Esophagus muscularis mucosa (tissue), 4 donors: ENCODE measurements at regions of chr5 and their contacts with region 1.

Region 1: DNA sequence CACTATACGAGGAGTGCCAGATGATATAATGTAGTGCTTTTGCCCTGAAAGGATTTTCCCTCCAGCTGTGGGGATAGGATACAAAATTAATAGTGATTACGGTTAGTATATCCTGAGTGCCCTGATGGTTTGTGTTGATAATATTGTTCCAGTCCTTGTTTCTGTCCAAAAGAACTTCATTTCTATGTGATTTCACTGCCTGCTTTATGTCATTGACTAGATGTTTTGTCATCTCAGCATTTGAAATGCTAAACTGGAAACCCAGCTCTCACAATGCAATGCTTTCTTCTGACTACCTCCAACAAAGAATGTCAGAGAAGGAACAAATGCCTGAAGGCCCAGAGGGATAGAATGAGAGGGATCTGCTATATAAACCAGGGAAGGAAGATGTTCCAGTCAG is 177.8 kb downstream of the NIPBL start:
- DNase-seq: no peak
- H3K4me3 ChIP-seq: no peak overlapping the region
- H3K27ac ChIP-seq: no peak overlapping the region
- H3K4me1 ChIP-seq: no peaks in the 10 kb centered on the region
- H3K27me3 ChIP-seq: no peaks in the 10 kb centered on the region
- CTCF ChIP-seq: no peak
- EP300 ChIP-seq: no peak
- POLR2A ChIP-seq: no peak

Region 2: GRCh38 chr5:36820900-36821299 is 233.5 kb before region 1 on chr5:
- intact Hi-C with region 1: no loop called
- DNase-seq: no peak
- H3K4me3 ChIP-seq: no peak overlapping the region
- H3K27ac ChIP-seq: no peak overlapping the region
- H3K4me1 ChIP-seq: no peaks in the 10 kb centered on the region
- H3K27me3 ChIP-seq: no peaks in the 10 kb centered on the region
- CTCF ChIP-seq: no peak
- EP300 ChIP-seq: no peak
- POLR2A ChIP-seq: no peak

Region 3: GRCh38 chr5:37165761-37166160 is 111.4 kb after region 1 on chr5:
- intact Hi-C with region 1: loop called (anchors 10 kb)
- DNase-seq: no peak
- H3K4me3 ChIP-seq: no peak overlapping the region
- H3K27ac ChIP-seq: no peak overlapping the region
- H3K4me1 ChIP-seq: no peaks in the 10 kb centered on the region
- H3K27me3 ChIP-seq: no peaks in the 10 kb centered on the region
- CTCF ChIP-seq: no peak
- EP300 ChIP-seq: no peak
- POLR2A ChIP-seq: no peak

Region 4: GRCh38 chr5:37319037-37319782 is 264.8 kb after region 1 on chr5:
- intact Hi-C with region 1: loop called (anchors 10 kb)
- DNase-seq: no peak
- H3K4me3 ChIP-seq: no peak overlapping the region
- H3K27ac ChIP-seq: no peak overlapping the region
- H3K4me1 ChIP-seq: peaks cover 0 to 3% (median 0%) of the 10 kb centered on the region in 4 donors
- H3K27me3 ChIP-seq: no peaks in the 10 kb centered on the region
- CTCF ChIP-seq: no peak
- EP300 ChIP-seq: no peak
- POLR2A ChIP-seq: no peak